ENCODE measurements at regions of chr15 and their contacts with region 1.

Region 1: GRCh38 chr15:40274350-40275274 is 8.3 kb downstream of the ANKRD63 start:
- DNase-seq: peak; percentile 95

Region 2: GRCh38 chr15:39782441-39783138 is 492.0 kb before region 1 on chr15 and contains the start of gene FSIP1:
- in situ Hi-C with region 1: loop called (anchors 25 kb)
- DNase-seq: peak; percentile 97

Region 3: DNA sequence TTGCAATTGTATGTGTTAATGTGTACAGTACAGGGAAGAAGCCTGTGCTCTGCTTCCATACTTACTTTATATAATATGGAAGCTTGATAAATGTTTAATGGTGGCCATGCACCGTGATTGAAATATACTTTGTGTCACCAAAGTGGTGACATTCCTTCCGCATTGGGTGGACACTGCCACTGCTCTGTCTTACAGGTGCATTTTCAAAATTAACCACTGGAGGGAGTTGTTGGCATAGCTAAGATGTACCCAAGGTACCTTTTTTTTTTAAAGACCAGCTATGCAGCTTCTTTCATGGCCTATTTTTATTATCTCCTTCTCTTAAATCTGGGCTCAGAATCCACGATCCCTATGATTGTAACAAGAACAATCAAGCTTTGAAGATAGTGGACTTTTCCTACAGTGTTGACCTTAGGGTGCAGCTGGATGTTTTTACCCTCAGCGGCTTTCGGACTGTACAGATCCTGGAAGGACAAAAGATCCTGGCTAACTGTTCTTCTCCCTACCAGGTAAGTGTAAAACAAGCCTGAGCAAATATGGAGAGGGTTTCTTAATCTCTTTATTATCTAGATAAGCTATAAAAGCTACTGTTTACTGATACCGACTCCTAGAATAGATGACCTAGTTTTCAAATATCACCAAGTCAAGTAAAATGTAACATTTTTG is 57.3 kb before region 1 on chr15:
- in situ Hi-C with region 1: loop called (anchors 10 kb)
- DNase-seq: peak; percentile 83

Measured in KBM-7 (cell line).